AG04449 (cell line): ENCODE measurements at regions of chr20 and their contacts with region 1.

Region 1: GRCh38 chr20:59495894-59496510 is 108.3 kb upstream of the PHACTR3 start:
- DNase-seq: no peak
- H3K4me3 ChIP-seq: no peak overlapping the region
- CTCF ChIP-seq: peak; percentile 93

Region 2: GRCh38 chr20:59087829-59088433 is 408.1 kb before region 1 on chr20:
- CTCF ChIA-PET with region 1: interaction called, 10 read pairs
- POLR2A ChIA-PET with region 1: no interaction called
- DNase-seq: no peak
- H3K4me3 ChIP-seq: no peak overlapping the region
- CTCF ChIP-seq: peak; percentile 81

Region 3: GRCh38 chr20:59473742-59474141 is 22.3 kb before region 1 on chr20:
- CTCF ChIA-PET with region 1: interaction called, 16 read pairs
- POLR2A ChIA-PET with region 1: no interaction called
- DNase-seq: no peak
- H3K4me3 ChIP-seq: no peak overlapping the region
- CTCF ChIP-seq: no peak

Region 4: GRCh38 chr20:59508729-59509128 is 12.7 kb after region 1 on chr20:
- CTCF ChIA-PET with region 1: interaction called, 18 read pairs
- POLR2A ChIA-PET with region 1: no interaction called
- DNase-seq: no peak
- H3K4me3 ChIP-seq: no peak overlapping the region
- CTCF ChIP-seq: no peak